ENCODE measurements at regions of chr12 and their contacts with region 1.

Region 1: DNA sequence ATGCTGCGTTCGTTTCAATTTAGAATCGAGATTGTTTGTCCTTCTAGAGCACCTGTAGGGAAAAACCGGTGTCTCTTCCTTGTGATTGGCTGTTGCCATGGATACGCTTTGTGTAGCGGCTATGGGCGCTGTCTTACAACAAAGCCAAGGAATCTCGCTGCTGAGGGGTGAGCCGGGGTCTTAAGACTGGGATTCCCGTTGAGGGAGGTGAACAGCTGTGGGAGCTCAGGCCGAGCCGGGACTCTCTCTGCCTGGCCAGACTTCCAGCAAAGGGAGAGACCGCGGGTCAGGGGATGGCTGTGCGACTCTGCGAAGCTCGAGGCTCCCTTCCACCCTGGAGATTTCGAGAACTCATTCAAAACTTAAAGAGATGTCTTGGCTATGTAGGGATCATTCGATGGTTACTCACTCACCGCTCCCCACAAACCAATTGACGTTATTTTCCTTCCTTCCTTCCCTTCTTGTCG is at the starts of genes LRRIQ1 and TSPAN19:
- DNase-seq: peak; percentile 48
- H3K4me3 ChIP-seq: peak within 1 kb of the TSS; percentile 4 to 47 (median 30)
- H3K27ac ChIP-seq: no peak within 1 kb of the TSS
- H3K4me1 ChIP-seq: peaks cover 0 to 7% (median 0%) of the 10 kb centered on the region in 4 donors
- H3K27me3 ChIP-seq: peaks cover 5% of the 10 kb centered on the region
- CTCF ChIP-seq: no peak
- EP300 ChIP-seq: no peak
- POLR2A ChIP-seq: no peak
- total RNA-seq, gene LRRIQ1: not detected
- total RNA-seq, gene TSPAN19: not detected

Region 2: GRCh38 chr12:84874125-84874824 is 162.0 kb before region 1 on chr12:
- in situ Hi-C with region 1: loop called in 2 of 4 experiments (anchors 10 to 25 kb)
- intact Hi-C with region 1: no loop called
- DNase-seq: no peak
- H3K4me3 ChIP-seq: no peak overlapping the region
- H3K27ac ChIP-seq: no peak overlapping the region
- H3K4me1 ChIP-seq: no peaks in the 10 kb centered on the region
- H3K27me3 ChIP-seq: no peaks in the 10 kb centered on the region
- CTCF ChIP-seq: peak; percentile 72 to 78 (median 72)
- EP300 ChIP-seq: no peak
- POLR2A ChIP-seq: no peak

Region 3: DNA sequence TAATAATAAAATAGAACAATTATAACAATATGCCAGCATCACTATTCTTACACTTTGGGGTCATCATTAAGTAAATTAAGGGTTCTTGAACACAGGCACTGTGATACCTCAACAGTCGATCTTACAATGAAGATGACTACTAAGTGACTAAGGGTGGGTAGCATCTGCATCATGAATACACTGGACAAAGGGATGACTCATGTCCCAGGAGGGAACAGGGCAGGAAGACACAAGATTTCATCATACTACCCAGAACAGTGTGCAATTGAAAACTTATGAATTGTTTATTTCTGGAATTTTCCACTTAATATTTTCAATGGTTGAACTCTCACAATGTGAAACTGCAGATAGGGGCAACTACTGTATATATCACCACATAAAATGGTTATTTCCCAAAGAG is 19.9 kb before region 1 on chr12:
- in situ Hi-C with region 1: no loop called
- intact Hi-C with region 1: no loop called
- DNase-seq: no peak
- H3K4me3 ChIP-seq: no peak overlapping the region
- H3K27ac ChIP-seq: no peak overlapping the region
- H3K4me1 ChIP-seq: no peaks in the 10 kb centered on the region
- H3K27me3 ChIP-seq: no peaks in the 10 kb centered on the region
- CTCF ChIP-seq: no peak
- EP300 ChIP-seq: no peak
- POLR2A ChIP-seq: no peak

Measured in transverse colon (tissue), 4 donors.